ENCODE measurements at regions of chr3 and their contacts with region 1.

Region 1: DNA sequence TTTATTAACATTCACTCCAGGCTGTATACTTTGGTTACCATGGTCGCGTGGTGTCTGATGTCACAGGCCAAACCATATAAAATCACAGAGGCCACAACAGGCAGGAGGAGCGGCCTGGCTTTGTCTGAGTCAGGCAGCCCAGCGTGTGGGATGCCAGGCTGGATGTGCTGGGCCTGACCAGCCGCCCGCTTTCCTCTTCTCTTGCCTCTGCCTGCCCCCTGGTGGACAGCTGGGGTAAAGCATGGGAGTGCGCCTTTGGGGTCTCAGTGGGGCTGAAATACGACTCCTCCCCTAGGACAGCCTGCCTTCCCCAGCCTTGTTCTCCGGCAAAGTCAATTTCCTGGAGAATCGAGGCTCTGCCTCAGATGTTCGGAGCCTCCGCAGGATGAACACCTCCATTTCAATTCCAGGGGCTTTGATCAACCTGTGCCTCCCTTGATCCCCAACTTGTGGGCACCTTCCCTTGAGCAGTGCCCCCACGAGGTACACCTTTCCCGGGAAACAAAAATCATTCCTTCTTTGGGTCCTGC is 78.2 kb downstream of the CCNL1 start:
- DNase-seq: peak; percentile 95
- ATAC-seq: peak; percentile 84

Region 2: DNA sequence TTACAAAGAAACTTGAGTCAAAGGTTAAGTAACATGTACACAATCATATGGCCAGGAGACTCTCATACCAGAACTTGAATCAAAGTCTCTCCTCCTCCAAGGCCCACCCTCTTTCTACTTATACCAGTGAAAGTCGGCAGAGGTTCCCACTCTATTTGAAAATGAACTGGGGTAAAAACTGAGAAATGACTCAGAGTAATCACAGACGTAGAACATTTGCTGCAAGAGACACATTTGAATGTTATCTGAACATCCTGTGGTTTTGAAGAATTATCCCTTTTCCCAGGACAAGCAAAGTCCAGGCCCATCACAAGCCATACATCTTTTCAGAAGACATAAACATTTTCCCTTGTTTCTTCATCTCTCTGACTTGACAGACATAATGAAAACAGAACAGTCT is 968.7 kb after region 1 on chr3:
- intact Hi-C with region 1: no loop called
- DNase-seq: no peak
- ATAC-seq: no peak

Region 3: DNA sequence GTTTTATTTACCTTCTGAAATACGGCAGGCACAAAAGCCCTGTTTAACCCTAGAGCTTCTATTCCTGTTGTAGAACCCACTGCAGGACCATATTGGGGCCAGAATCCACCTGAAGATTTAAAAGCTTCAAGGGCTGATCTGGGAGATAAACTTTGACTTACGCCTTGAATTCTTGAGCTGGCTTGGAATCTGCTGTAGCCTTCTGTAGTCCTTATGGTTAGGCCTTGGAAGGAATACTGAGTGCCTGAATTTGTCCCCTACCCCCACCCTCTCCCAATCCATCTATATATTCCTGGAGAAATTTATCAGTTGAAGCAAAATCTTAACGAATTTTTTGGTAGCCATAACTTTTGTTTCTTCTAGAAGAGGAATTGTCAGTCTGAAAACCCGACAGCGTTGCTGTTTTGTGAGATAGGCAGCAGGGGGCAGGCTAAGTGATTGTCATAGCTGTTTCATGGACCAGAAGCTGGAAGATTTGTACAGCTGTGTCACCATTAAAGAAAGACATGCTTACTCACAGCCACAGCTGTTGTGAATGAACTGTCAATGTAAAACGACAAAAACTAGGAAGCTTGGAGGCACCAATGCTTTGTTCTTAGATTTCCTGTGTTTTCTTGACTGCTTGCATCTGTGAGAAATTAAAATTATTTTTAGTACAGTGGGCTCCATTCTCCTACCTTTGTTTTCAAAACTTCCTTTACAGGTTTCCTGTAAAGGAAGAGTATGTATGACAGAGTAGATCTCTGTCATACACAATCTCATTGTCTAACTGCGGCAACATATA is 1577.9 kb after region 1 on chr3:
- intact Hi-C with region 1: loop called (anchors 10 kb)
- DNase-seq: no peak
- ATAC-seq: peak; percentile 46